Panc1 (cell line): ENCODE measurements at regions of chr10 and their contacts with region 1.

Region 1: GRCh38 chr10:68550747-68551411 is 9.3 kb upstream of the TET1 start:
- DNase-seq: peak; percentile 76
- ATAC-seq: peak; percentile 86
- H3K4me3 ChIP-seq: no peak overlapping the region
- H3K27ac ChIP-seq: no peak overlapping the region
- H3K4me1 ChIP-seq: no peaks in the 10 kb centered on the region
- H3K27me3 ChIP-seq: no peaks in the 10 kb centered on the region
- CTCF ChIP-seq: peak; percentile 93

Region 2: DNA sequence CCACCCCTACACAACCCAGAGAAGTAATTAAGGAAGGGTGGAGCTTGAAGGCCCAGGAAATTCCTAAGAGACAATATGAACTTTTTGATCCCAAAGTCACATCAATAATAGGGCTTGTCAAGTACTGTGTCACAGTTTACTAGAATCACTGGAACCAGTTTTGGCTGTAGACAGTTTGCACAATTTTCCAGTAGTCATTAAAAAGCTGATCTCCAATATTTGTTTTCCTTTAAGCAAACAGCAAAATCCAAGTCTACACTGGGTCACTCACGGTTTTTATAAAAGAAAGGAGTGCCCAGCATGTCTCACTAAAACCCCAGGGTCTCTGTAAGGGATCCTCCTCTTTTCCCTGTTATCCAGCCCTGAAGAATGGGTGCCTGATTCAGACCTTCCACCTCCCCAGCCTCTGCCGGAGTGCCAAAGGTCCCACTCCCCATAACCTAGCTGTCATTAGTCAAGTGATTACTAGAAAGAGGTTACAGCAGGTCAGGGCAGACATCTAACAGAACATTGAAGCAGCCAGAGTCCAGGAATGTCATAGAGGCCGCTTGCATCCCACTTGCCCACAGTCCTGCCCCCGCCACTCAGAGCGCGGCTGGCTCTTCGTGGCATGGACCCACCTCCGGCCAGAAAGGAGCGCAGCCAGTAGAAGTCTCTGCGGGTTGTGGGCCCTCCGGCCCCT is 24.1 kb before region 1 on chr10:
- CTCF ChIA-PET with region 1: no interaction called
- POLR2A ChIA-PET with region 1: interaction called, 11 read pairs
- in situ Hi-C with region 1: no loop called
- intact Hi-C with region 1: no loop called
- DNase-seq: no peak
- ATAC-seq: peak; percentile 80
- H3K4me3 ChIP-seq: peak overlapping the region; percentile 91 to 96
- H3K27ac ChIP-seq: peak overlapping the region; percentile 89
- H3K4me1 ChIP-seq: no peaks in the 10 kb centered on the region
- H3K27me3 ChIP-seq: no peaks in the 10 kb centered on the region
- CTCF ChIP-seq: no peak

Region 3: DNA sequence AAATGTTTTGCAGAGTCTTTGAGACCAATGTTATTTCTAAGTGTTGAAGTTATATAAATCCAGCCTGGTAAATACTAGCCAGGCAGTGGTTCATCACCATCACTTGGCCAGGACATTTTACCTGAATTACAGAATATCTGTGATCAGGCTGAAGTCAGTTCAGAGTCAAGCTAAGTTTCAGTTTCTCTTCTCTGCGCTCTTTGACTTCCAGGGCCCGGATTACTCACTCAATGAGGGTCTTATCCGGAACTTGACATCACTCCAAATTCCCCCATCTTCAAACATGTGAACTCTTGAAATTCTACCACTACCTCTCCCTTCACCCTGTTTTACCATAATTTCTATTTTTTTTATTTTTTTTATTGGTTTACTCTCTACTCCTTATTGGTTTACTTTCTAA is 133.5 kb after region 1 on chr10:
- CTCF ChIA-PET with region 1: no interaction called
- POLR2A ChIA-PET with region 1: no interaction called
- in situ Hi-C with region 1: no loop called
- intact Hi-C with region 1: no loop called
- DNase-seq: no peak
- ATAC-seq: no peak
- H3K4me3 ChIP-seq: no peak overlapping the region
- H3K27ac ChIP-seq: no peak overlapping the region
- H3K4me1 ChIP-seq: no peaks in the 10 kb centered on the region
- H3K27me3 ChIP-seq: no peaks in the 10 kb centered on the region
- CTCF ChIP-seq: no peak

Region 4: DNA sequence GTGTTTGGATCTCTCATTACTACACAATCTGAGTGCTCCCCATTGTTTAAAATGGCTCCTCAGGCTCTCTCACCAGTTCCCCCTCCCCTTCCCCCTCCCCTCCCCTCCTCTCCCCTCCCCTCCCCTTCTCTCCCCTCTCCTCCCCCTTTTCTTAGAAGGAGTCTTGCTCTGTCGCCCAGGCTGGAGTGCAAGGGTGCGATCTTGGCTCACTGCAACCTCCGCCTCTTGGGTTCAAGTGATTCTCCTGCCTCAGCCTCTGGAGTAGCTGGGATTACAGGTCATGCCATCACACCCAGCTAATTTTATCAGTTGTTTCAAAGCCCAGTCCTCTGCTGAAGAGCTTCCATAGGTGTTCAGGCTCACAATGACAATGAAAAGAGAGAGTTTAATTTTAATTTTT is 166.6 kb after region 1 on chr10:
- CTCF ChIA-PET with region 1: no interaction called
- POLR2A ChIA-PET with region 1: no interaction called
- in situ Hi-C with region 1: no loop called
- intact Hi-C with region 1: no loop called
- DNase-seq: no peak
- ATAC-seq: no peak
- H3K4me3 ChIP-seq: no peak overlapping the region
- H3K27ac ChIP-seq: no peak overlapping the region
- H3K4me1 ChIP-seq: no peaks in the 10 kb centered on the region
- H3K27me3 ChIP-seq: no peaks in the 10 kb centered on the region
- CTCF ChIP-seq: no peak

Region 5: DNA sequence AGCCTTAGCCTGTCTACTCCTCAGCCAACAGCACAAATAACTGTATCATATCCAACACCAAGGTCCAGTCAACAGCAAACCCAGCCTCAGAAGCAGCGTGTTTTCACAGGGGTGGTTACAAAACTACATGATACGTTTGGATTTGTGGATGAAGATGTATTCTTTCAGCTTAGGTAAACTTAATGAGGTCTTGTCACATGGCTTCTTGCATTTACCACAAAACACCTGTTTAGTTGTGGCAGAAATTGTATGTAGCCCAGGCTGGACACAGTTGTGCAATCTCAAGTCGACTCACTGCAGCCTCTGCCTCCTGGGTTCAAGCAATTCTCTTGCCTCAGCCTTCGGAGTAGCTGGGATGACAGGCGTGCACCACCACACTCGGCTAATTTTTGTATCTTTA is 191.5 kb after region 1 on chr10:
- CTCF ChIA-PET with region 1: interaction called, 3 read pairs
- POLR2A ChIA-PET with region 1: interaction called, 15 read pairs
- in situ Hi-C with region 1: no loop called
- intact Hi-C with region 1: no loop called
- DNase-seq: no peak
- ATAC-seq: no peak
- H3K4me3 ChIP-seq: no peak overlapping the region
- H3K27ac ChIP-seq: no peak overlapping the region
- H3K4me1 ChIP-seq: no peaks in the 10 kb centered on the region
- H3K27me3 ChIP-seq: no peaks in the 10 kb centered on the region
- CTCF ChIP-seq: no peak